Left colon (tissue), 2 donors: ENCODE measurements at regions of chr3 and their contacts with region 1.

Region 1: GRCh38 chr3:160003520-160004128 is 15.0 kb downstream of the IL12A start:
- DNase-seq: peak; percentile 48 to 72
- ATAC-seq: peak; percentile 91

Region 2: DNA sequence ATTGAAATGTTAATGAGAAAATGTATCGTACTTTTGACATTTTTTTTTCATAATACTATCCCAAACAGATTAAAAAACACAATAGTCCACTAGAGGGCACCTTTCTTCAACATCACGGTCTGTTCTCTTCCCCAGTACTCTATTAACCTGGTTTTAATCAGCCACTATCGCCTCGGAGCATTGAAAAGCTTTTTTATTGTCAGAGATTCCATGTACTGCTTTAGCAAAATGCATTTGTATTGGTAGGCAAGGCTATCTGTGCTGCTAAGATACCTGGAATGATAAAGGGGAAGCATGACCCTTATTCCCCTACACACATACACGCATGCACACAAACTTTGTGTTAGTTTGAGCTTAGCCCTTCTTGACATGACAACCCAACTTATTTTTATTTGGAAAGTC is 175.1 kb before region 1 on chr3:
- intact Hi-C with region 1: loop called in 1 of 2 experiments (anchors 5 kb)
- DNase-seq: no peak
- ATAC-seq: peak; percentile 45

Region 3: GRCh38 chr3:159884661-159885402 is 118.8 kb before region 1 on chr3:
- intact Hi-C with region 1: loop called in 1 of 2 experiments (anchors 10 kb)
- DNase-seq: no peak
- ATAC-seq: peak; percentile 50

Region 4: DNA sequence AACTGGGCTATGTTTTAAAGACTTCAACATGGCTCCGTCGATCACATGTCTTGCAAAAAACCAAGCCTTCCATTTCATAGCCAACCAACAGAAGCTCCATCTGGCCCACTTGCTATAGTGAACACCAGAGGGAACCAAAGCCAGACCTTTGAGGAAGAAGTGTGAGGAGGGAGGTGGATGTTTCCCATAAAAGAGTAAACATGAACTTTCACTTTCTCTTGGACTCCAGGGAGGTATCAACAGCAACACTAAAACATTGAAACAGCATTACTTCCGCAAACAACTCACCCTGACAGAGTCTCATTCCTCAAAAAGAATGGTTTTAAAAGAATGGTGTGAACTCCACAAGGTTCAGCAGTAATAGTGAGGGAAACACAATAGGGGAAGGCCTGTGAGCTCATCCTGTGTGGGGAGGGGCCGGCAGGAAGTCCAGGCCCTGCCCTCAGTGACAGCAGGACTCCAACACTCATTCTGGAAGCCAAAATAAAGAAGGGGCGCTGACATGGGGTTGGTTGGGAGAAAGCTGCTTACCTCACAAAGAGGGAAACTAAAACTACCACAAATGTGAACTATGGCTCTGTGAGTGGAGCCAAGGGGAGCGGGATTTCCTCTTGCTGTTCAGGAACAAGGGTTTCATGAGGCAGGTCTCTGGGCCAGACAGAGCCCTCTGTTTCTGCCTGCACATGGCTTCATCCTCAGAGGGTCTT is 74.0 kb before region 1 on chr3:
- intact Hi-C with region 1: loop called in 1 of 2 experiments (anchors 5 kb)
- DNase-seq: no peak
- ATAC-seq: peak; percentile 99

Region 5: GRCh38 chr3:160319322-160319721 is 315.7 kb after region 1 on chr3:
- intact Hi-C with region 1: no loop called
- DNase-seq: no peak
- ATAC-seq: no peak